ENCODE measurements at regions of chr16 and their contacts with region 1.

Region 1: GRCh38 chr16:46549477-46549876 is 71.7 kb downstream of the SHCBP1 start:
- DNase-seq: no peak
- H3K4me3 ChIP-seq: no peak overlapping the region
- H3K27ac ChIP-seq: no peak overlapping the region
- H3K4me1 ChIP-seq: no peaks in the 10 kb centered on the region
- H3K27me3 ChIP-seq: no peaks in the 10 kb centered on the region
- CTCF ChIP-seq: no peak
- POLR2A ChIP-seq: no peak

Region 2: DNA sequence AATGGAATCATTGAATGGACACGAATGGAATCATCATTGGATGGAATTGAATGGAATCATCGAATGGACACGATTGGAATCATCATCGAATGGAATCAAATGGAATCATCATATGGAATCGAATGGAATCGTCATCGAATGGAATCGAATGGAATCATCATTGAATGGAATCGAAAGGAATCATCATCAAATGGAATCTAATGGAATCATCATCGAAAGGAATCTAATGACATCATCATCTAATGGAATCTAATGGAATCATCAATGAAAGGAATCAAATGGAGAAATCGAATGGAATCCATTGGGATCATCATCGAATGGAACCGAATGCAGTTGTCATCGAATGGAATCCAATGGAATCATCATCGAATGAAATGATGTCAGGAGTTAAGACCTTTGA is 83.3 kb before region 1 on chr16:
- intact Hi-C with region 1: no loop called
- DNase-seq: no peak
- H3K4me3 ChIP-seq: no peak overlapping the region
- H3K27ac ChIP-seq: no peak overlapping the region
- H3K4me1 ChIP-seq: no peaks in the 10 kb centered on the region
- H3K27me3 ChIP-seq: no peaks in the 10 kb centered on the region
- CTCF ChIP-seq: no peak
- POLR2A ChIP-seq: no peak

Region 3: DNA sequence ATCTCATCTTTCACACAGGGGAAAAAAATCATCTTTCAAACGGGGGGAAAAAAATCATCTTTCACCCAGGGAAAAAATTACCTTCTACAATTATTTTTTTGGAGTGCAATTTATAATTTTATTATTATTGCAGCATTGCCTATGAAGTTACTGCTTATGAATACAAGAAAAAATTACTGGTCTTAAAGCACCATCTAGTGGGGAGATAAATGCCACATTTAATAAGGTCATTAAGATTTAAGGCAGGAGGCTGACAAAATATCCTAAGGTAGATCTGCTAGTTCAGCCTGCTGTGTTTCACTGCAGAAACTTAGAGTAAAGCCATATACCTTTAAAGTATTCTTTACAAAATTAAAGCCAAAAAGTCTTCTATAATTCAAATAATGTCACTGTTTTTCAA is 58.1 kb after region 1 on chr16:
- intact Hi-C with region 1: loop called in 1 of 2 experiments (anchors 5 kb)
- DNase-seq: no peak
- H3K4me3 ChIP-seq: no peak overlapping the region
- H3K27ac ChIP-seq: no peak overlapping the region
- H3K4me1 ChIP-seq: no peaks in the 10 kb centered on the region
- H3K27me3 ChIP-seq: no peaks in the 10 kb centered on the region
- CTCF ChIP-seq: peak; percentile 37 to 59 (median 50)
- POLR2A ChIP-seq: no peak

Measured in adrenal gland (tissue), 19 donors.